CD4-positive, alpha-beta T cell (primary cell): ENCODE measurements at regions of chr1 and their contacts with region 1.

Region 1: GRCh38 chr1:198481661-198482060 is 58.8 kb downstream of the ATP6V1G3 start:
- DNase-seq: no peak
- ATAC-seq: no peak
- H3K4me3 ChIP-seq: no peak overlapping the region
- H3K4me3 Mint-ChIP-seq: no peak overlapping the region
- H3K27ac ChIP-seq: no peak overlapping the region
- H3K27ac Mint-ChIP-seq: no peak overlapping the region
- H3K4me1 ChIP-seq: no peaks in the 10 kb centered on the region
- H3K4me1 Mint-ChIP-seq: no peaks in the 10 kb centered on the region
- H3K27me3 ChIP-seq: no peaks in the 10 kb centered on the region
- H3K27me3 Mint-ChIP-seq: no peaks in the 10 kb centered on the region
- CTCF ChIP-seq: no peak

Region 2: DNA sequence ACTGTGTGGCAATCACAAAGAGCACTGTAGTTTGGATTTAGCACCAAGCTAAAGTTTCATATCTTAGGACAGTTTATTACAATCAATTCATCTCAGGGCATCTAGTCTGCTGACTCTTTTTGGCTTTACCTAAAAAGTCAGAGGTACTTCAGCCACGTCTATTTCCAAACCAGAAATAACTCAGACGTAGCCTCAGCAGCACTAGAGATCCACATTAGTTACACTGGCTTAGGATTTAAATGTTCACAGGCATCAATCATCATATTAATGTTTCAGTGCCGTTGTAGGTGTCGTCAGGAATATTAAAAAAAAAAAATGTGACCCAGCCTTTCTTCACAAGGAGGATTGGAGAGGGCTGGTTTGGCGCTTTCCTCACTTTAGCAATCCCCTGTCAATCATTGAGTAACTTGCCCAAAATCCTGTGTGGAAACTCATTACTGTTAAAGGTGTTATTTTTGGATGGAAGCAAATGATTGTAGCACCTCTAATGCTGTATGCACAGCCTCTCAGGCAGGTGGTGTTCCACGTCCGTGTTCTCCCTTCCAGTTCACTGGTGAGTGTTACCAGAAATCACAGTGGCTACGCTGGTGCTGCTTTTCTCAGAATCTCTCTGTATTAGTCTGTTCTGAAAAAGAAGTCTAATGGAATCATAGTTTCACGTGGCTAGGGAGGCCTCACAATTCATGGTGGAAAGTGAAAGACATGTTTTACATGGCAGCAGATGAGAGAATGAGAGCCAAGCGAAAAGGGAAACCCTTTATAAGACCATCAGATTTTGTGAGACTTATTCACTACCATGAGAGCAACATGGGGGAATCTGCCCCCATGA is 279.5 kb before region 1 on chr1:
- CTCF ChIA-PET with region 1: no interaction called
- POLR2A ChIA-PET with region 1: no interaction called
- intact Hi-C with region 1: loop called in 1 of 2 experiments (anchors 10 kb)
- DNase-seq: no peak
- ATAC-seq: no peak
- H3K4me3 ChIP-seq: no peak overlapping the region
- H3K4me3 Mint-ChIP-seq: peak overlapping the region; percentile 45
- H3K27ac ChIP-seq: no peak overlapping the region
- H3K27ac Mint-ChIP-seq: no peak overlapping the region
- H3K4me1 ChIP-seq: peaks cover 29% of the 10 kb centered on the region
- H3K4me1 Mint-ChIP-seq: peaks cover 84% of the 10 kb centered on the region
- H3K27me3 ChIP-seq: no peaks in the 10 kb centered on the region
- H3K27me3 Mint-ChIP-seq: no peaks in the 10 kb centered on the region
- CTCF ChIP-seq: no peak